ENCODE measurements at regions of chr14 and their contacts with region 1.

Region 1: GRCh38 chr14:54652188-54652587 is 85.3 kb downstream of the SAMD4A start:
- DNase-seq: peak; percentile 84 to 89
- ATAC-seq: peak; percentile 73 to 79 (median 76)
- H3K4me3 ChIP-seq: peak overlapping the region; percentile 51
- H3K27ac ChIP-seq: peak overlapping the region; percentile 88
- H3K4me1 ChIP-seq: peaks cover 71% of the 10 kb centered on the region
- H3K27me3 ChIP-seq: peaks cover 0 to 4% (median 0%) of the 10 kb centered on the region in 3 donors
- CTCF ChIP-seq: no peak

Region 2: GRCh38 chr14:54686219-54686870 is 34.2 kb after region 1 on chr14:
- intact Hi-C with region 1: loop called in 1 of 2 experiments (anchors 2 kb)
- DNase-seq: peak; percentile 46 to 68
- ATAC-seq: peak; percentile 36 to 78 (median 64)
- H3K4me3 ChIP-seq: peak overlapping the region; percentile 12
- H3K27ac ChIP-seq: peak overlapping the region; percentile 88
- H3K4me1 ChIP-seq: peaks cover 49% of the 10 kb centered on the region
- H3K27me3 ChIP-seq: no peaks in the 10 kb centered on the region
- CTCF ChIP-seq: no peak

Region 3: DNA sequence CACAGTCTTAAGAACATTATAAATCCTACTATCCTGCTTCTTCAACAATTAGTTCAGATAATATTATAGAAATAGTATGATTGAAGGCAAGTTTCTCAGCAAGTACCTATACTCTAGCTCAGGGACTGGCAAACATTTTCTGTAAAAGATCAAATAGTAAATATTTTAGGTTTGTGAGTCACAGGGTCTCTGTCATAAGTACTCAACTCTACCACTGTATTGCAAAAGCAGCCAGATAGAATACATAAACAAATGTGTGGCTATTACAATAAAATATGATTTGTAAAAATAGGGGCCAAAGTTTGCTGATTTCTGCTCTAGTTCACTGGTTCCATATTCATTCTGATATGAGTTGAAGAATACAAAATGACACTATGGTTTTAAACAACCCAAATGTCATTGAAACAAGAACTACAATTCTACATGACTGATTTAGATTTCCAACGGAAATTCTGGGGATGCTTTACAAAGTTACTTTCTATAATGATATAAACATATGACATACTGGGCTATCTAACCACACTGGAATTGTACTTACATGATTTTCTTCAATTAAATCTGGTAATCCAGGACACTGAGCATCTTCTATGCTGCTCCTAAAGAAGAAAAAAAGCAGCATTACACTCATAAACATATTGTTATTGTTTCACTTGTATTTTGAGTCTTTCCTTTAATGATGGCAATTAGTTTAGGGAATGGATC is 500.0 kb after region 1 on chr14:
- intact Hi-C with region 1: no loop called
- DNase-seq: no peak
- ATAC-seq: no peak
- H3K4me3 ChIP-seq: no peak overlapping the region
- H3K27ac ChIP-seq: no peak overlapping the region
- H3K4me1 ChIP-seq: no peaks in the 10 kb centered on the region
- H3K27me3 ChIP-seq: no peaks in the 10 kb centered on the region
- CTCF ChIP-seq: no peak